ENCODE measurements at regions of chr5 and their contacts with region 1.

Region 1: DNA sequence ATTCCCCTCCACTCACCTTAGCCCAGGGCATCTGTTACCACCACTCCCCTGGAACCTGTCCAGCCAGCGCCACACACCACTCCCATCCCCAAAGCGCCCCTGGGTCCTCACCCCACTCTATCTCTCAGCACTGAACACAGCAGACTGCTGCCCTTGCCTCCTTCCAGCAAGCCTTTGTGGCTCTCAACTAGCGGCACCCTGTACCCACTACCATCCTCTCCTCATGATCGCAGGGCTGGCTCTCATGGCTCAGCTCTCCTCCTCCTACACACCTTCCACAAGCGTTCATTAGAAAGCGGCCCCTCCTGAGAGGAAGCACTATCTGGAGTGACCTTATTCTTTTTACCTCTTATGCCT is 13.3 kb upstream of the BASP1 start:
- DNase-seq: no peak
- H3K4me3 Mint-ChIP-seq: no peak overlapping the region
- H3K27ac Mint-ChIP-seq: no peak overlapping the region
- H3K4me1 Mint-ChIP-seq: no peaks in the 10 kb centered on the region
- H3K27me3 Mint-ChIP-seq: peaks cover 12% of the 10 kb centered on the region
- CTCF ChIP-seq: no peak

Region 2: GRCh38 chr5:16345454-16345853 is 858.7 kb before region 1 on chr5:
- CTCF ChIA-PET with region 1: no interaction called
- POLR2A ChIA-PET with region 1: no interaction called
- intact Hi-C with region 1: loop called (anchors 10 kb)
- DNase-seq: peak; percentile 25
- H3K4me3 Mint-ChIP-seq: no peak overlapping the region
- H3K27ac Mint-ChIP-seq: no peak overlapping the region
- H3K4me1 Mint-ChIP-seq: no peaks in the 10 kb centered on the region
- H3K27me3 Mint-ChIP-seq: peaks cover 55% of the 10 kb centered on the region
- CTCF ChIP-seq: no peak

Region 3: DNA sequence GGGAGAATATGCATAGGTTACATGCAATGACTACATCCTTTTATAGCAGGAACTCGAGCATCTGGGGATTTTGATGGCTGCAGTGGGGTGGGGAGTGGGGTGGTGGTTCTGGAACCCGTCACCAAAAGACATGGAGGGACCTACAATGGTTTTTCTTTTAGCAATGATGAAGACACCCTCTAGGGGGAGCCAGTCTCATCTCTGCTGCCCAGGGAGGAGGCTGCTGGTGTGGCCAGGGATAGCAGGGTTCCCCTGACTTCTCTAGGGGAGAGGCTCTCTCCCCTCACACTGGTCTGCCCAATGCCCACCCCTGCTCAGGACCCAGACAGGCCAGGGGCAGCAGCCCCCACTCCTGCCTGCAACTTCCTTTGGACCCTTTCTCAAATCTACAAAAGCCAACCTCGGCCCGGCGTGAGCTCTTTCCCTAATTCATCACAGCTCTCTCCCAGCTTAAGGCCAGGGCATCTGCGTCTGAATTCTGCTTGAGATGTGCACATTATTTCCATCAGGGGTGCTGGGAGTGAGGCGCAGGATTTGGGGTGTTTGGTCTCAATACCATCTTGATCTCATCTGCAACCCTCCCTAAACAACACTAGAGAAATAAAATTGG is 513.8 kb before region 1 on chr5:
- CTCF ChIA-PET with region 1: interaction called, 3 read pairs
- POLR2A ChIA-PET with region 1: no interaction called
- intact Hi-C with region 1: loop called (anchors 1 kb)
- DNase-seq: peak; percentile 59
- H3K4me3 Mint-ChIP-seq: no peak overlapping the region
- H3K27ac Mint-ChIP-seq: no peak overlapping the region
- H3K4me1 Mint-ChIP-seq: no peaks in the 10 kb centered on the region
- H3K27me3 Mint-ChIP-seq: no peaks in the 10 kb centered on the region
- CTCF ChIP-seq: peak; percentile 48

Measured in MCF 10A (cell line).